ENCODE measurements at regions of chr20 and their contacts with region 1.

Region 1: GRCh38 chr20:4083098-4083865 is 67.9 kb upstream of the RNF24 start:
- DNase-seq: no peak
- H3K27ac ChIP-seq: peak overlapping the region; percentile 49; the same call in 1 of the 2 replicates
- CTCF ChIP-seq: no peak

Region 2: DNA sequence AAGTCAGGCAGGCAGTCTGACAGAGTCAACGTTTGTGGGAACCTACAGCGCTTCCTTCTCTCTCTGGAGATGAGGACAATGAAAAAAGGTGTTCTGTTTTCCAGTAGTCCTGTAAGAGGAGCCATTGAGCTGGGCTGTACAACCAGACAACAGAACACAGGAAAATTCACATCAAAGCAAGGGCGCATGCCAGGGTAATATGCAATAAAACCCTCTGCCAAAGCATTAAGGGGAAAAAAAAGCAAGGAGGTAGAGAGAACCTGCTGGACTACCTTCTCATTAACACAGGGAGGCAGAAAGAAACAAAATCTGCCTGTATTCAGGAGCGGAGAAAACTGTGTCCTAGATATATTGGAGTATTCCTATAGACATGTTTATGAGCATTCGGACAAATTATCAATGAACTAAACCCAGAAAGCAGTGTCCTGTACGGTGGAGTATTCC is 69.2 kb before region 1 on chr20:
- CTCF ChIA-PET with region 1: interaction called, 21 read pairs
- POLR2A ChIA-PET with region 1: no interaction called
- DNase-seq: peak; percentile 72
- H3K27ac ChIP-seq: no peak overlapping the region
- CTCF ChIP-seq: peak; percentile 95

Region 3: GRCh38 chr20:4071178-4071693 is 12.0 kb before region 1 on chr20:
- CTCF ChIA-PET with region 1: interaction called, 17 read pairs
- POLR2A ChIA-PET with region 1: interaction called, 3 read pairs
- DNase-seq: no peak
- H3K27ac ChIP-seq: peak overlapping the region; percentile 80
- CTCF ChIP-seq: no peak

Region 4: GRCh38 chr20:4102381-4102780 is 19.1 kb after region 1 on chr20:
- CTCF ChIA-PET with region 1: no interaction called
- POLR2A ChIA-PET with region 1: no interaction called
- DNase-seq: peak; percentile 63
- H3K27ac ChIP-seq: peak overlapping the region; percentile 65
- CTCF ChIP-seq: no peak

Measured in RWPE1 (cell line).